Posterior cingulate gyrus (tissue), 11 donors: ENCODE measurements at regions of chr18 and their contacts with region 1.

Region 1: GRCh38 chr18:6885992-6886796 is 156.7 kb downstream of the ARHGAP28 start:
- DNase-seq: peak in 4 of 10 donors; percentile 29 to 59 (median 50)

Region 2: GRCh38 chr18:5868218-5869115 is 1017.7 kb before region 1 on chr18:
- intact Hi-C with region 1: loop called (anchors 2 kb)
- DNase-seq: peak in 7 of 10 donors; percentile 53 to 92 (median 70)

Region 3: DNA sequence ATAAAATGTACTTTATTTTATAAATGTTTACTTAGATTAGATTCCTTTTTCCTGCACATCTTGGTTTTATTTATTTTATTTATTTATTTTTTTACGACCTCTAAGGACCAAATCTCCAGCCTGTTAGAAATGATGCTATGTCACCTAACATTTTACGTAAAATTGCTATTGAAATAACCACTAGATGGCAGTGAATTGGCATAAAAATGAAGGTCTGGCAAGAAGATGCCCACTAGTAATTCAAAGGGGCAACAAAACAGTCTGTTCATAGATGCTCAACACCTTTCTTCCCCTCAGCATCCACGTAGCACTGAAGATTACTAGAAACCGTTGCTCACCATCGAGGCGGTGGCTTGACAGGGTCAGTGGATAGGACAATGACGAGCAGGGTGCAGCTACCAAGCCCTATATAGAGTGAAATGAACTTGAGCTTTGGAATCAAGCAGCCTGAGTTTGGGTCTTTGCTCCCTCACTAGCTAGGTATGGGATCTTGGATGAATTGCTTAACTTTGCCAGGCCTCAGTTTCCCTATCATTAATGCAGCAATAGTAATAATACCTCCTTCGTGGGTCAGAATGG is 342.8 kb before region 1 on chr18:
- intact Hi-C with region 1: loop called (anchors 2 kb)
- DNase-seq: no peak

Region 4: DNA sequence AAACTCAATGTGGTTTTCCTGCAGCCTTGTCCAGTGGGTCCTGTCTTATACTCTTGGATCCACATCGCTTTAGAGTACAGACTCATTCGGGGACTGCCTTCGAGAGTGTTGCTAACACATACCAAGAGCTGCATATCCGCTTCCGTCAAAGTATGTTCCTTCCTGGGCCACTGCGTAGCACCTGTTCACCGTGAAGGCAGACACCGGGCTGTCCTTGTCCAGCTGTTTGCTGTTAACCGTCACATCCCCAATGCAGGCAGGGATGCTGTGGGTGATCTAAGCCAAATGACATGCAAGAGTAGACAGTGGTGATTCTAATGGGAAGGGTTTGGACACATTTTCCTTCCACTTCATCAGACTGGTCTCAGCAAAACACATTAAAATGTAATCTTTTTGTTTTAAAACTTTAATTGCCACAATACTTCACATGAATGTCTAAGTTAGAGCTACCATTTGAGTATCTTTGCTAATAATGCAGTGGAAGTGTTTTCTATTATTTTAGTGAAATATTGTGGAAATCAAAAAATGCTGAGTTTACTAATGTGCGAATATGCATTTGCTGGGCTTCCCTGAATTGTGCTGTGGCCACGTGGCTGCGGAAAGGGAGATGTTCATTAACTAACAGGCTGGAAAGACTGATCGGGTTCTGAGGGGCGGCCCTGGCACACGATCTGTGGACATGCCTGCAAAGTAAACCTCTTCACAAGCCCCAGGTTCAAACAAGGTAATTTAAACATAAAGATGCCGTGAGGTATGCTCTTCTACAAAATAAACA is 62.3 kb after region 1 on chr18:
- intact Hi-C with region 1: no loop called
- DNase-seq: no peak